ENCODE measurements at regions of chr13 and their contacts with region 1.

Region 1: GRCh38 chr13:33911521-33911920 is 93.6 kb downstream of the RFC3 start:
- DNase-seq: peak; percentile 71
- H3K4me3 ChIP-seq: no peak overlapping the region
- H3K27ac ChIP-seq: no peak overlapping the region
- H3K4me1 ChIP-seq: peaks cover 8% of the 10 kb centered on the region
- H3K27me3 ChIP-seq: no peaks in the 10 kb centered on the region
- CTCF ChIP-seq: no peak

Region 2: GRCh38 chr13:33799950-33800592 is 111.5 kb before region 1 on chr13:
- CTCF ChIA-PET with region 1: no interaction called
- dilution Hi-C with region 1: no loop called
- in situ Hi-C with region 1: no loop called
- intact Hi-C with region 1: no loop called
- DNase-seq: peak; percentile 11
- H3K4me3 ChIP-seq: no peak overlapping the region
- H3K27ac ChIP-seq: no peak overlapping the region
- H3K4me1 ChIP-seq: peaks cover 8% of the 10 kb centered on the region
- H3K27me3 ChIP-seq: no peaks in the 10 kb centered on the region
- CTCF ChIP-seq: peak; percentile 48 to 55

Region 3: DNA sequence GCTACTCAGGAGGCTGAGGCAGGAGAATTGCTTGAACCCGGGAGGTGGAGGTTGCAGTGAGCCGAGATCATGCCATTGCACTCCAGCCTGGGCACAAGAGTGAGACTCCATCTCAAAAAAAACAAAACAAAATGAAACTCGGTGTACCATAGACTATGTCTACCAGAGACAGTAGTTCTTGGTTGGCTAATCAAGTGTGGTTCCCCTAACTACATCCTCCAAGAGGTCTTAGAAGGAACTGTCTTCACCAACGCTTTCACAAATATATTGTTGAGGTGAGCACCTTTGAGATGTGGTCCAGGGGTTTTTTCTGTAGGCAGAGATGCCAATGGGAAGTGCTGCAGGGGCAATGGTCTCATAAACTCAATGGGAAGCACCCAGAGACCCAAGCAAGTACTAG is 45.6 kb before region 1 on chr13:
- CTCF ChIA-PET with region 1: no interaction called
- dilution Hi-C with region 1: no loop called
- in situ Hi-C with region 1: no loop called
- intact Hi-C with region 1: loop called (anchors 1 kb)
- DNase-seq: no peak
- H3K4me3 ChIP-seq: no peak overlapping the region
- H3K27ac ChIP-seq: no peak overlapping the region
- H3K4me1 ChIP-seq: no peaks in the 10 kb centered on the region
- H3K27me3 ChIP-seq: no peaks in the 10 kb centered on the region
- CTCF ChIP-seq: no peak